ENCODE measurements at regions of chr1 and their contacts with region 1.

Region 1: DNA sequence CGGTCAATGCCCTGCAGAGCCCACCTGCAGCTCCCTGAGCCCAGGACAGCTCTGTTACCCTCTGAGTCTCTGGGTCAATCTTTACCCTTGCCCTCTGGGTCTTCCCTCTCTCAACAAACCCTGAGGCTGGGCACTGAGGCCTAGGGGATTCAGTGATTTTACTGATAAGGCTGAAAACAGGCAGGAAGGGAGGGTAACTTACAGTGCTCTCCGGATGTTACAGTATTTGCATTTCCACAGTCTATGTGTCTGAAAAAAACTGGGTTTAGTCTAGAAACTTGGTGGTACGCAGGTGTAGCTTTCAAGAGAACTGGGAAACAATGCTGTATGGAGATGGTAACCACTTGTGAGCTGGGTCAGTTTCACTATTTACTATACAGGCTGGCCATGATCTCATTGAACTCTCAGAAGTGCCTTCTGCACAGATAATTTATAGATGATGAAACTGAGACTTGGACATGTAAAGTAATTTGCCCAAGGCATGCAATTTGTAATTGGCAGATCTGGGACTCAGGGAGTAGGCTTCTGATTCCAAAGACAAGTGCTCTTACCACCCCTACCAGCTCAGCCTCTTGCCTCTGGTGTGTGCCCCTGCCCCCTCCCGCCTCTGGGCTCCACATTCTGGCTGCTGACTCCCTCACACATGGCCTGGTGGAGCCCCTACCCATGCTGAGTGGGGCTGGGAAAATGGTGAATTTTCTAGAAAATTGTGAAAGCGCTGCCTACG is 48.8 kb downstream of the TENT5C start:
- DNase-seq: no peak
- ATAC-seq: peak; percentile 34
- H3K4me3 Mint-ChIP-seq: peak overlapping the region; percentile 16
- H3K27ac Mint-ChIP-seq: peak overlapping the region; percentile 79
- H3K4me1 Mint-ChIP-seq: peaks cover 78% of the 10 kb centered on the region
- H3K27me3 Mint-ChIP-seq: peaks cover 18% of the 10 kb centered on the region

Region 2: GRCh38 chr1:117555806-117556205 is 98.8 kb before region 1 on chr1:
- CTCF ChIA-PET with region 1: no interaction called
- POLR2A ChIA-PET with region 1: no interaction called
- intact Hi-C with region 1: no loop called
- DNase-seq: no peak
- ATAC-seq: no peak
- H3K4me3 Mint-ChIP-seq: no peak overlapping the region
- H3K27ac Mint-ChIP-seq: no peak overlapping the region
- H3K4me1 Mint-ChIP-seq: no peaks in the 10 kb centered on the region
- H3K27me3 Mint-ChIP-seq: peaks cover 2% of the 10 kb centered on the region

Region 3: GRCh38 chr1:117674521-117675397 is 20.1 kb after region 1 on chr1:
- CTCF ChIA-PET with region 1: interaction called, 12 read pairs
- POLR2A ChIA-PET with region 1: interaction called, 3 read pairs
- intact Hi-C with region 1: no loop called
- DNase-seq: peak; percentile 67
- ATAC-seq: peak; percentile 72
- H3K4me3 Mint-ChIP-seq: no peak overlapping the region
- H3K27ac Mint-ChIP-seq: no peak overlapping the region
- H3K4me1 Mint-ChIP-seq: peaks cover 16% of the 10 kb centered on the region
- H3K27me3 Mint-ChIP-seq: no peaks in the 10 kb centered on the region

Region 4: DNA sequence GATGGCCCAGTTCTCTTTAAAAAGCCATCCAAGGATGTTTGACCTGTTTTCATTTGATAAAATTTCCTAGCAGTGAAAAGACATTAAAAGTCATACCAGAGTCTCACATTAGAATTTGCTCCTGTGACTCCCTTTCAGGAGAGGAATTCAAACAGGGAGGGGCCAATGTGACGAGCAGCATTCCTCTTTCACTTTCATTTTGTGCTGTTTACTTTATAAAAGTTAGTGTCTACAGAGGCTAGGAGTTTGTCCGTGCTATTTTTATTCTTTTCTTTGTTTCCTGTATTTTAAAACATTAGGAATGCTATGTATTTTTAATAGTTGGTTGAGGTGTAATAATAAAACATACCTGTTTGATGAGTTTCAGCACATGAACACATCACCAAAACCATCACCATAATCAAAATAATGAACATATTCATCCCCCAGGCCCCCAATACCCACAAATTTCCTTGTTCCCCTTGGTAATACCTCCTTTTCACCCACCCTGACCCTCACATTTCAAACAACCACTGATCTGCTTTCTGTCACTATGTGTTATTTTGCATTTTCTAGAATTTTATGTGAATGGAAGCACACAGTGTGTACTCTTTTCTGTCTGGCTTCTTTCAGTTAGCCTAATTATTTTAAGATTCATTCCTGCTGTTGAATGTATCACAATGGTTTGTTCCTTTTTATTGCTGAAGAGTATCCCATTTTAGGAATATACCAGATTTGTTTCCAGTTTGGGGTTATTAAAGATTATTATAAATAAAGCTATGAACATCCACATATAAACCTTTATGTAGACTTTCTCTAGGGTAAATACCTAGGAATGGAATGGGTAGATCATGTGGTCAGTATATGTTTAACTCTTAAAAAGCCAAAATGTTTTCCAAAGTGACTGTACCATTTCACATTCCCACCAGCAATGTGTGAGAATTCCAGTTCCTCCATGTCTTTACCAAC is 80.7 kb after region 1 on chr1:
- CTCF ChIA-PET with region 1: no interaction called
- POLR2A ChIA-PET with region 1: no interaction called
- intact Hi-C with region 1: no loop called
- DNase-seq: peak; percentile 51
- ATAC-seq: peak; percentile 74
- H3K4me3 Mint-ChIP-seq: peak overlapping the region; percentile 54
- H3K27ac Mint-ChIP-seq: peak overlapping the region; percentile 93
- H3K4me1 Mint-ChIP-seq: peaks cover 4% of the 10 kb centered on the region
- H3K27me3 Mint-ChIP-seq: no peaks in the 10 kb centered on the region

Region 5: GRCh38 chr1:117810553-117810952 is 155.9 kb after region 1 on chr1:
- CTCF ChIA-PET with region 1: no interaction called
- POLR2A ChIA-PET with region 1: no interaction called
- intact Hi-C with region 1: no loop called
- DNase-seq: no peak
- ATAC-seq: peak; percentile 39
- H3K4me3 Mint-ChIP-seq: no peak overlapping the region
- H3K27ac Mint-ChIP-seq: no peak overlapping the region
- H3K4me1 Mint-ChIP-seq: peaks cover 9% of the 10 kb centered on the region
- H3K27me3 Mint-ChIP-seq: peaks cover 7% of the 10 kb centered on the region

Region 6: DNA sequence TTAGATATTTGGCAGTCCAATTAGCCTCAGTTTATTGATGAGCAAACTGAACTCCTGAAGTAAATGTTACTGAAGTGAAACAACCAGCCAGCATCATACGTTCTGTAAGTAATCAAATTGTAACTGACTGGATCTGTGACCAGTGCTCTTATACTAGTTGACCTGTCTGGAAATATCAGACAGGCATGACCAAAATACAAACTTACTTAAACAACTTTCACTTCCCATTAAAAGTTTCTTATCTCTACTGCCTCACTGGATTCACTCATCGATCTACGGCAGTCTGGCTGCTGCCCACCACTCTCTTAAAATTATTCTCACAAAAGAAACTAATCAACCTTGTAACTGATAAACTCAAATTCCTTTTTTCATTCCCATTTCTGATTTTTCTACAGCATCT is 331.3 kb after region 1 on chr1:
- CTCF ChIA-PET with region 1: no interaction called
- POLR2A ChIA-PET with region 1: interaction called, 10 read pairs
- intact Hi-C with region 1: no loop called
- DNase-seq: no peak
- ATAC-seq: no peak
- H3K4me3 Mint-ChIP-seq: no peak overlapping the region
- H3K27ac Mint-ChIP-seq: no peak overlapping the region
- H3K4me1 Mint-ChIP-seq: no peaks in the 10 kb centered on the region
- H3K27me3 Mint-ChIP-seq: peaks cover 26% of the 10 kb centered on the region